Gastrocnemius medialis (tissue), 4 donors: ENCODE measurements at regions of chr9 and their contacts with region 1.

Region 1: DNA sequence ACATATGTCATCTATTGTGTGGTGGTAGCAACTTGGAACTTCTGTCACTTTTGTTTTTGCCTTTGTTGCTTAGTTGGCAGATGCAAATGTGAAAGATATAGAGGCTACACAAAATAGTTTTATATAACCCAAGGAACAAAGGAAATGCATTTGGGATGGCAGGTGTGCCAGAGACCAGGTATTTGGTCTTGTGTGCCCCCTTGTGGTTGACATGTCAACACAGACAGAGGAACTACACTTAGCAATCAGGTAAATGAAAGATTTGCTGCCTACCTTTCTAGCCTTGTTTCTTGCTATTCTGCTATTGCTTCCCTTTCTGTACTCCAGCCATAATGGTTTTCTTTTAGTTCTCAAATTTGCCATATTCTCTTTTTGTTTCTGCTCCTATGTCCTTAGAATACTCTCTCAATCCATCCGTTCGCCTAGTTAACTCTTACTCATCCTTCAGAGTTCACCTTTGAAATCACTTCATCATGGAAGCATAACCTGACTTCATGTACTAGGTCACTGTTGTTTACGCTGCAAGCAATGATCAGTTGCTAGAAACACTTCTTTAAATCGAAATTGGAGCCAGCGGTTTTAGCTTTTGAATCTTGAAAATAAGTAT is 119.5 kb downstream of the TRPM3 start:
- DNase-seq: no peak
- ATAC-seq: no peak
- H3K4me3 ChIP-seq: no peak overlapping the region
- H3K27ac ChIP-seq: no peak overlapping the region
- H3K4me1 ChIP-seq: no peaks in the 10 kb centered on the region
- H3K27me3 ChIP-seq: no peaks in the 10 kb centered on the region
- CTCF ChIP-seq: peak in 2 of 5 experiments; percentile 14 to 34
- POLR2A ChIP-seq: no peak

Region 2: DNA sequence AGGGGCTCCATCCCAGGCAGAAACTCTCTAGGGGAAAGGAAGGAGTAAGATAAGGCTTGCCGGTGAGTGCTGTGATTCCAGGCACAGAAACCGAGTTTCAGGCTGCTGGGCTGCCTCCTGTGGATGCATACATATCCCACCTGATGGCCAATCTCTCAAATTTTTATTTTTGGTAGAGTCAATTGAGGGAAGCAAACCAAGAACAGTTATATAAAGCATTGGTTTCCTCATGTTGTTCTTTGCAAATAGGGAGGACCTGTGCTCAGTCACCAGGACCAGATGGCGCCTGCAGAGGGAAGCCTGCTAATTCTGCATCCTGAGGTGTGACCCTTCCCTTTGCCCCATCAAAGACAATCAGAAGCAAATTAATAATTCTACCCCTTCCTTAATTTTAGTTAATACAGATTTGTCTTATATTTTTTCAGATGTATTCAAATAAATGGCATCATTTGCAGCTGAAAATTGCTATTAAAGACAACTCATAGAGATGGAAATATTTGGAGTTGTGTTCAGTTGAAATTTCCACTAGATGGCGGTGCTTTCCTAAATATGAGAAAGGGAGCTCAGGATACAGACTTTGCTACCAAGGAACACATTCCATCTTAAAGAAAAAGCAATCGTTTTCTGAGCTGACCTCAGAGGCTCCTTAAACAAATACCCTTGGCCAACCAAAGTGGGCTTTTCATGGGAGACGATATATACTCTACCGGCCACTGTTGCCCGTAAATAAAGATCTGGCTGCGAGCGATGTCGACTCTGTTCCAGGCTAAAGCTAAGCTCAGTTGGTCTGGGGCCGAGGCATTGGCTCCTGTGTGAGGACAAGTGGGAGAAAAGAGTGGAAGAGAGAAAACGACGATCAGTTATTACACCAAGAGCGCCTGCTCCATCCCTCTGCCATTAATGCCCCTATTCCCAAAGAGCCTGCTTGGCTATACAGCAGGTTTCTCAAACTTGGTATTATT is 361.7 kb before region 1 on chr9:
- in situ Hi-C with region 1: no loop called
- intact Hi-C with region 1: loop called (anchors 5 kb)
- DNase-seq: no peak
- ATAC-seq: peak; percentile 69 to 75
- H3K4me3 ChIP-seq: no peak overlapping the region
- H3K27ac ChIP-seq: no peak overlapping the region
- H3K4me1 ChIP-seq: no peaks in the 10 kb centered on the region
- H3K27me3 ChIP-seq: no peaks in the 10 kb centered on the region
- CTCF ChIP-seq: peak in 4 of 5 experiments; percentile 43 to 58 (median 54)
- POLR2A ChIP-seq: no peak

Region 3: GRCh38 chr9:71121275-71122021 is 119.6 kb after region 1 on chr9 and contains the start of gene TRPM3:
- in situ Hi-C with region 1: no loop called
- intact Hi-C with region 1: no loop called
- DNase-seq: no peak
- ATAC-seq: no peak
- H3K4me3 ChIP-seq: no peak within 1 kb of the TSS
- H3K27ac ChIP-seq: no peak within 1 kb of the TSS
- H3K4me1 ChIP-seq: no peaks in the 10 kb centered on the region
- H3K27me3 ChIP-seq: peaks cover 5 to 24% (median 6%) of the 10 kb centered on the region in 3 donors
- CTCF ChIP-seq: no peak
- POLR2A ChIP-seq: no peak
- total RNA-seq, gene TRPM3: 0.07 to 0.66 TPM in 2 of 4 donors, not detected in the others